AG04449 (cell line): ENCODE measurements at regions of chr2 and their contacts with region 1.

Region 1: DNA sequence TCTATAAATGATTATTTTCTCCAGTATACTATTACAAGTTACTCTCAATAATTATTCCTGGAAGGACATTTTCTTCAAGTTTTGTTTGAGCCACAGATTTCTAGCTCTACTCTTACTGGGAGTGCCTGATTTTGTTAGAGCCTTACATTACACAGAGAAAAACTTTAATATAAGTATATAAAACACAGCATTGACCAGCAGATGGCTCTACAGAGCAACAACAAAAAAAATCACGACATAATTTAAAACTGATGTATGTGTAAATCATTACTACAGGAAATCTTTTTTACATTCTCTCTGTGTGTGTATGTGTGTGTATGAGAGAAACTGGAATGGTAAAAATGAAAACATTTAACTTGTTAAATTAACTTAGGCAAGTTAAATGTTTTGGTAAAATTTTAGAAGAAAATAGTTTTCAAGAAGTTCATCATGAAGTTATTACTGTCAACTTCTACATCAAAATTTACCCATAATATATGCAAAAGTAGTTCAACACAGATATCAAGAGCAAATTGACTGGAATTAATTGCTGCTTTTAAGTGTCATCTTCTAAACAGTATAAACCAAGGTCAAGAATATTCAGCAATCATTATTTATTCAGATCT is 103.3 kb downstream of the MDH1 start:
- DNase-seq: no peak
- H3K4me3 ChIP-seq: no peak overlapping the region
- CTCF ChIP-seq: peak; percentile 4

Region 2: DNA sequence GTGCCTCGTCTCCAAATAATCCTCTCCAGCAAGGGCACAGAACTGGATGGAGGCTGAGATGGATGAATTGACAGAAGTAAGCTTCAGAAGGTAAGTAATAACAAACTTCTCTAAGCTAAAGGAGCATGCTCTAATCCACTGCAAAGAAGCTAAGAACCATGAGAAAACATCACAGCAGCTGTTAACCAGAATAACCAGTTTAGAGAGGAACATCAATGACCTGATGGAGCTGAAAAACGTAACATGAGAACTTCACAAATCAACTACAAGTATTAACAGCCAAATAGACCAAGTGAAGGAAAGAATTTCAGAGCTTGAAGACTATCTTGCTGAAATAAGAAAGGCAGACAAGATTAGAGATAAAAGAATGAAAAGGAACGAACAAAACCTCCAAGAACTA is 136.2 kb before region 1 on chr2:
- CTCF ChIA-PET with region 1: no interaction called
- POLR2A ChIA-PET with region 1: no interaction called
- DNase-seq: no peak
- H3K4me3 ChIP-seq: no peak overlapping the region
- CTCF ChIP-seq: no peak

Region 3: GRCh38 chr2:63676135-63676534 is 16.0 kb before region 1 on chr2:
- CTCF ChIA-PET with region 1: interaction called, 32 read pairs
- POLR2A ChIA-PET with region 1: no interaction called
- DNase-seq: no peak
- H3K4me3 ChIP-seq: no peak overlapping the region
- CTCF ChIP-seq: no peak

Region 4: GRCh38 chr2:63841254-63842022 is 149.3 kb after region 1 on chr2 and contains the start of gene UGP2:
- CTCF ChIA-PET with region 1: interaction called, 11 read pairs
- POLR2A ChIA-PET with region 1: no interaction called
- DNase-seq: peak; percentile 72
- H3K4me3 ChIP-seq: peak within 1 kb of the TSS; percentile 83
- CTCF ChIP-seq: peak; percentile 33

Region 5: GRCh38 chr2:63856303-63856603 is 164.1 kb after region 1 on chr2:
- CTCF ChIA-PET with region 1: interaction called, 170 read pairs
- POLR2A ChIA-PET with region 1: no interaction called
- DNase-seq: no peak
- H3K4me3 ChIP-seq: no peak overlapping the region
- CTCF ChIP-seq: no peak

Region 6: DNA sequence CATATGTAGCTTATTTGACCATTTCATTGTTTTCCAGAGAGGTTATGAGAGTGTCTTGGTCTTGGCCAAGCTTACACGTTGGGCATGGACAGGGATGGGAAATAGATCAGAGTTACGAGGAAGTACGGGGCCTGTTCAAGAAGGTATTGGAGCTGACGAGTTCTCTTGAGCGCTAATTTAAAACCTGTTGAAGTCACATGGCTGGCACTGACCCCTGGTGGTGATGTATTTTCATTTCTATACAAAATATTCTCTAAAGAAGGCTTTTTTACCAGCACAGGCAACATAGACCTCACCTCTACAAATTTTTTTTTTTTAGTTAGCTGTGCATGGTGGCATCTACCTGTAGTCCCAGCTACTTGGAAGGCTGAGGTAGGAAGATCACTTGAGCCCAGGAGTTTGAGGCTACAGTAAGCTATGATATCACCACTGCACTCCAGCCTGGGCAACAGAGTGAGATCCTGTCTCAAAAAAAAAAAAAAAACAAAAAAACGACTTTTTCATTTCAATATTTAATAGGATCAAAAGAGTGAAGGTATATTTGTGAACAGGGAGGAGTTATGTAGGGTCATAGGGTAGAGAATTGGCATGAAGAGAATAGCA is 169.2 kb after region 1 on chr2:
- CTCF ChIA-PET with region 1: interaction called, 170 read pairs
- POLR2A ChIA-PET with region 1: no interaction called
- DNase-seq: no peak
- H3K4me3 ChIP-seq: no peak overlapping the region
- CTCF ChIP-seq: peak; percentile 21

Region 7: DNA sequence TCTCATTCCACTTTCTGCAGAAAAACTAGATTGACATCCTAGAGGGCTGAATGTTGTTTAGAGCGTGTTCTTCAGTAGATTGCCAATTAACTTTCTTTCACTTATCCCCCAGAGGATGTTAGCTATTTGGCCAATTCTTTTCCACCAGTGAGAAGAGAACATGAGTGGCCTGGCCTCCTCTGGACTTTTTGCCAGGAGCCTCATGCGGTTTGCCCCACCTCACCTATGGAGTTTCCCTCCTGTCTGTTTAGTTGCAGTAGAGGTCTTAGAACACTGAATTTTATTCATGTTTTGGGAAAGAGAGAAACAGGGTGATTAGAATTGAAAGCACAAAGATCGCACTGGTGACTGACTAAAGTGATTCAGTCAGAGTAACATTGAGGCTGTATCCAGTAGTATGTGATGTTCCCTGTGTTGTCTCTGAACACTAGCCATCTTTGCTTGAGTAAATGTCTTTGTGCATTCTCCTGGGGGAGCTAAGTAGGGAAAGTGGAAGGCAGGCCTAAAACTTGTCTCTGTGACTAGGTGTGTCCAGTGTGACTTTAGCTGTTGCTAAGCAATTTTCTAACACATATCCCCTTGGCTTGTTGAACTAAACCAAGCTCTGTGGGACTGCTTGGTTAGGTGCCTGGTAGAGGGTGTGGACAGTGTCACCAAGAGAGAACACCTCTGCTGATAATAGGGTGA is 183.6 kb after region 1 on chr2:
- CTCF ChIA-PET with region 1: interaction called, 14 read pairs
- POLR2A ChIA-PET with region 1: no interaction called
- DNase-seq: no peak
- H3K4me3 ChIP-seq: no peak overlapping the region
- CTCF ChIP-seq: no peak